ENCODE measurements at regions of chr16 and their contacts with region 1.

Region 1: DNA sequence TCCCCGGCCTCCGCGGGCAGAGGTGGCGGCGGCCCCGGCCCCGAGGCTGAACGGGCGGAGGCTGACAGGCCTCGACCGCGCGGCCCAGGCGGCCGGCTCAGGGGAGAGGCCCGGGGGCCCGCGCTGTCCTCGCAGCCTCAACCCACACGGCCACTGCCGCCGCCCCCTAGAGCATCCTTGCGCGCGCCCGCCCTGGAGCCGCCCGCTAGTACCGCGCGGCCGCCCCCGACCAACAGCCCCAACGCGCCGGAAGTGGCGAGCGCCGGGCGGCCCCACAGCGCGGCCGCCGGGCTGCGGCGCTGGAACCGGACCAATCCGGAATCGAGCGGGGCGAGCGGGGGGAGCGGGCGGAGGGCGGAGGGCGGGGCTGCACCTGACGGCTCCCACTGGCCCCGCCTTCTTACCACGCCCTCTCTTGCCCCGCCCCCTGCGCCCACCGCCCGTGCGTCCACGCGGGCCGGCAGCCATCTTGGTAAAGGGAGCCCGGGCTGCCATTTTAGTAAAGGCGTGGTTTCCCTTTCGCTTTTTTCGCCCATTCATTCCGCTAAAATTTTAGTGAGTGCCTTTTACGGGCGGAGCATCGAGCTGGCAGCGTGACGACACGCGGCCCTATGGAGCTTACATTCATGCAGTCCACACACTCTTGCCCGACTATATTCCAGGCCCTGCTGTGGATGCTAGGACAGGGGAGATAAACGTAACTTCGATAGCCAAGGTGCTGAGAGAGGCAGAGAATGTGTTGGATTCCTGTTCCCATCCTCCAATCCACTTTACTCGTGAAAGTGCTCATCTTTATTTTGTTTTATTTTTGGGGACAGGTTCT is at the start of gene XPO6:
- DNase-seq: peak; percentile 96 to 98 (median 98)
- ATAC-seq: peak; percentile 92
- H3K4me3 ChIP-seq: peak within 1 kb of the TSS; percentile 86
- H3K27ac ChIP-seq: peak within 1 kb of the TSS; percentile 93
- H3K4me1 ChIP-seq: peaks cover 12 to 23% of the 10 kb centered on the region in 2 experiments; a peak in 4 of 5 replicates
- H3K27me3 ChIP-seq: no peaks in the 10 kb centered on the region
- CTCF ChIP-seq: no peak
- EP300 ChIP-seq: no peak
- POLR2A ChIP-seq: peak; percentile 83
- RAD21 ChIP-seq: no peak
- polyA plus RNA-seq, gene XPO6: 11.2 to 31.0 TPM

Region 2: GRCh38 chr16:28166394-28167208 is 45.3 kb before region 1 on chr16:
- CTCF ChIA-PET with region 1: no interaction called
- POLR2A ChIA-PET with region 1: interaction called, 5 read pairs
- in situ Hi-C with region 1: no loop called
- intact Hi-C with region 1: loop called (anchors 10 kb)
- DNase-seq: no peak
- ATAC-seq: no peak
- H3K4me3 ChIP-seq: no peak overlapping the region
- H3K27ac ChIP-seq: no peak overlapping the region
- H3K4me1 ChIP-seq: peaks cover 0 to 5% of the 10 kb centered on the region in 2 experiments; a peak in 1 of 5 replicates
- H3K27me3 ChIP-seq: no peaks in the 10 kb centered on the region
- CTCF ChIP-seq: no peak
- EP300 ChIP-seq: no peak
- POLR2A ChIP-seq: no peak
- RAD21 ChIP-seq: no peak

Region 3: GRCh38 chr16:28193530-28194423 is 18.1 kb before region 1 on chr16:
- CTCF ChIA-PET with region 1: no interaction called
- POLR2A ChIA-PET with region 1: interaction called, 10 read pairs
- in situ Hi-C with region 1: no loop called
- intact Hi-C with region 1: no loop called
- DNase-seq: no peak
- ATAC-seq: no peak; the same call in 2 of the 3 replicates
- H3K4me3 ChIP-seq: no peak overlapping the region
- H3K27ac ChIP-seq: no peak overlapping the region
- H3K4me1 ChIP-seq: peaks cover 3 to 10% of the 10 kb centered on the region in 2 experiments; a peak in 2 of 5 replicates
- H3K27me3 ChIP-seq: no peaks in the 10 kb centered on the region
- CTCF ChIP-seq: no peak
- EP300 ChIP-seq: no peak
- POLR2A ChIP-seq: no peak
- RAD21 ChIP-seq: no peak

Measured in K562 (cell line).